Panc1 (cell line): ENCODE measurements at regions of chr6 and their contacts with region 1.

Region 1: DNA sequence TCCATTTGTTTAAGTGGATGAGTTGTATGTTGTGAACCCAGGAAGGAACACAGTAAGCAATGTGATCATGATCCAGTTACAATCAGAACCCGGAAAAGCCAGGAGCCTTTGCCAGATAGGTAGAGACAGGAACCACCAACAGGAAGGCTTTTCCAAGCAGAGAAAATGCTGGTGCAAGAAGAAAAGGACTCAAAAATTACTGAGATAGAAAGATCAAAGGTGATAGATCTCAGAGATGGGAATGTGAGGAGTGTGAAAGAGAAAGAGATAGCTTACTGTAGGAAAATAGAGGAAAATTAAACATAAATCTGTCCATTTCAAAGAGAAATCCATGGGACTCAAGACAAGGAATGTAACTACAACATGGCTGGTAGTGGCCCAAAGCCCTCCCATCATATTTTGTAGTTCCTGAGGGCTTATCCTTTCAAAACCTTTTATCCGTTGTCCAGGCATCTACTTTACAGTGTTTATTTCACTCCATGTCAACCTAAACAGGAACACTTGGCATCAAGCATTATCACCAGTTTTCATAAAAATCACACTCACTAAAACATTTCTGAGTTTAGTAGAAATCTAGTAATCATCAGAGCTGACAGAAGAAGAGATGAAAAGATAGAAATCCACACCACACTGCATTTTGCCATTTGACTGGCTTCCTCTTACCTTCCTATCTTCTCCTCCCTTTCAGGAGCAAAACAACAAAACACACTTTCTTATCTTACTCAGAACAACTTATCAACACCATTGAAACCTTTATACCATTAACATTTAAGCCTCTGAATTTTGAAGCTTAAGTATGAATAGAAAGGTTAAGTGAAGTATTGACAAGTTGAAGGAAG is 44.5 kb upstream of the STXBP5 start:
- DNase-seq: no peak
- ATAC-seq: no peak
- H3K4me3 ChIP-seq: no peak overlapping the region
- H3K27ac ChIP-seq: no peak overlapping the region; the same call in 1 of the 2 replicates
- H3K4me1 ChIP-seq: no peaks in the 10 kb centered on the region
- H3K27me3 ChIP-seq: no peaks in the 10 kb centered on the region
- CTCF ChIP-seq: no peak

Region 2: GRCh38 chr6:146974351-146974750 is 185.4 kb before region 1 on chr6:
- CTCF ChIA-PET with region 1: no interaction called
- POLR2A ChIA-PET with region 1: interaction called, 14 read pairs
- in situ Hi-C with region 1: no loop called
- intact Hi-C with region 1: no loop called
- DNase-seq: no peak
- ATAC-seq: no peak
- H3K4me3 ChIP-seq: no peak overlapping the region
- H3K27ac ChIP-seq: no peak overlapping the region; the same call in 1 of the 2 replicates
- H3K4me1 ChIP-seq: no peaks in the 10 kb centered on the region
- H3K27me3 ChIP-seq: no peaks in the 10 kb centered on the region
- CTCF ChIP-seq: no peak